ENCODE measurements at regions of chr11 and their contacts with region 1.

Region 1: DNA sequence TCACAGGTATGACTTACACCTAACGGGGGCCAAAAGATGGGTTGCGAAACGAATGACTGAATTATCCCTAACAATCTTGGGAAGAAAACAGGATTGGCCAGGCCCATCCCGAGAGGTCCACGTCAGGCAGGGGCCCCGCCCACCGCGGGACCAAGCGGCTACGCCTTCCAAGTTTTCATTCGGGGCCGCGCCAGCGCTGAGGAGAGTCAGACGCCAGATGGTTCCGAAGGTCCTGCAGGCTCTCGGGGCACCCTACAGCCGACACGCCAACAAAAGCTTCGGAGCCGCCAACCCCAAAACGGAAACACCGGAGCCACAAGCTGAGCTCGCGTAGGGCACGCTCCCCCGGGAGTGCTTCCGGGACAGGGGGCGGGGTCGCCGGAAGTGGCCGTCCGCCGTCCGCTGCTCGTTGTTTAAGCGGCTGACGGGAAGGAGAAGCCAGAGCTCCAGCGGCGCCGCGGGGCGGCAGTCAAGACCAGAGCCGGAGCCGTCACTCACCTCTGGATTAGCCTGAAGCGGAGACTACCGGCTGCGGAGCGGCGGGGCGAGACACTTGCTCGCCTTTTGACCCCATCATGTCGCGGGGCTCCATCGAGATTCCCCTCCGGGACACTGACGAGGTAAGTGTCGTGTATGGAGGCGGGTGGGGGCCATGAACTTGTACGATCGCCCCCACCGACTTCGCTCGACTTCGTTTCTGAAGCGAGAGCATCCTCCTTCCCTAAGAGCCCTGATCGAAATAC is at the start of gene CTR9:
- DNase-seq: peak; percentile 92 to 97 (median 95)
- H3K4me3 ChIP-seq: peak within 1 kb of the TSS; percentile 63 to 99 (median 89)
- H3K27ac ChIP-seq: peak within 1 kb of the TSS; percentile 80 to 99 (median 97)
- H3K27me3 ChIP-seq: no peaks in the 10 kb centered on the region
- CTCF ChIP-seq: peak in 45 of 56 donors; percentile 20 to 68 (median 39)
- total RNA-seq, gene CTR9: 20.3 to 43.5 (median 27.9) TPM

Region 2: GRCh38 chr11:10857709-10858438 is 106.9 kb after region 1 on chr11 and contains the start of gene ZBED5:
- intact Hi-C with region 1: loop called (anchors 2 to 5 kb)
- DNase-seq: peak; percentile 97 to 99 (median 98)
- H3K4me3 ChIP-seq: peak within 1 kb of the TSS; percentile 50 to 98 (median 86)
- H3K27ac ChIP-seq: peak within 1 kb of the TSS; percentile 94 to 100 (median 99)
- H3K27me3 ChIP-seq: no peaks in the 10 kb centered on the region
- CTCF ChIP-seq: peak in 24 of 56 donors; percentile 6 to 41 (median 20)
- total RNA-seq, gene ZBED5: 45.9 to 102 (median 63.1) TPM

Measured in dorsolateral prefrontal cortex (tissue), 120 donors.